ENCODE measurements at regions of chr15 and their contacts with region 1.

Region 1: DNA sequence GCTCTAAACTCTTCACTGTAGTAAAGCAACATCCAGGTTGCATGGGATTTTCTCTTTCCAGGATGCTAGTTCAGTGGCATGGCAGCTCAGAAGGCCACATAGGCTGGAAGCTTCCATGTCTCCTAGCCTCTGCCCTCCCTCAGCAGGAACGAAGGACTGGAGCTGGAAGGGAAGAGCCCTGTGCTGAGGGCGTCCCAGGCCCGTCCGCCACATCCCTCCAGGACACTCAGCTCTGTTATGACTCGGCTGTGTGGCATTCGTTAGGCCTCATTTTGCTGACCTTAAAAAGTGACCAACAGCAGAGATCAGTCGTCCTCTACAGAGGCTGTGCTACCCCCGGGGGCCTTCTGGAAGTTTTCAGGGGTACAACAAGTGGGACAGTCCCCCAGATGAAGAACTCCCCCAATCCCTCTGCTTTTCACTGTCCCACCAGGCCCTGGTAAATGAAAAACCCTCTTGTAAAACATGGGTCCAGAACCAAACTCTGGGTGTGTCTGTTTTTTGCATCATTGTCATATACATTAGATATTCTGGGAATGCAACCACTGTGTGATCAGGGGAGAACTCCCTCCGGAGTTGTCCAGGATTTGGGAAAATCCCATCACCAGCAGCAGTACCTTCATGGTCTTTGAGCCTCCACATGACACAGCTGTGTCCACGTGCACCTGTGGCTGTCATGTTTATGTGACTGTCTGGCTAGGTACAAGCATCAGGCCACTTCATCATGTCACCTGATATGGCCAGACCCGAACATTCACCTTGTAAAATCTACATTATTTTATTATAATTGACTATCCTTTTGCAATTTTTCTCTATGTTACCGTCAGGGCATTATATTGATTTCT is 149.9 kb downstream of the OR4M2 start:
- H3K4me3 Mint-ChIP-seq: no peak overlapping the region
- H3K27ac Mint-ChIP-seq: no peak overlapping the region
- H3K4me1 Mint-ChIP-seq: no peaks in the 10 kb centered on the region
- H3K27me3 Mint-ChIP-seq: peaks cover 2% of the 10 kb centered on the region

Region 2: GRCh38 chr15:22240951-22241350 is 10.8 kb after region 1 on chr15:
- intact Hi-C with region 1: loop called (anchors 1 kb)
- H3K4me3 Mint-ChIP-seq: no peak overlapping the region
- H3K27ac Mint-ChIP-seq: no peak overlapping the region
- H3K4me1 Mint-ChIP-seq: peaks cover 6% of the 10 kb centered on the region
- H3K27me3 Mint-ChIP-seq: peaks cover 17% of the 10 kb centered on the region

Region 3: DNA sequence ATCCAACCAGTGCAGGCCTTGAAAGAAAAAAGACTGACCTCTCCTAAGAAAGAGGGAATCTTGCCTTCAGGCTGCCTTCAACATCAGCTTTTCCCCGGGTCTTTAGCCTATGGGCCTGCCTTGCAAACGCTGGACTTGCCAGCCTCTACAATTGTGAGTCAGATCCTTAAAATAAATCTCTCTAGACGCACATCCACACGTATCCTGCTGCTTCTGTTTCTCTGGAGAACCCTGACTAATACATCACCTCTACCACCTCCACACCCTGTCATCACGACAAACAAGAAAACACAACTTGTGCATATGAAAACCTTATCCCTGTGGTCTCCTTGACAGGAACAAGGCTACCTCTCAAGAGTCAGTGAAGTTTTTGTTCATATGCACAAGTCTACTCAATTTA is 738.2 kb after region 1 on chr15:
- intact Hi-C with region 1: no loop called
- H3K4me3 Mint-ChIP-seq: no peak overlapping the region
- H3K27ac Mint-ChIP-seq: peak overlapping the region; percentile 37
- H3K4me1 Mint-ChIP-seq: peaks cover 53% of the 10 kb centered on the region
- H3K27me3 Mint-ChIP-seq: no peaks in the 10 kb centered on the region